ENCODE measurements at regions of chr2 and their contacts with region 1.

Region 1: DNA sequence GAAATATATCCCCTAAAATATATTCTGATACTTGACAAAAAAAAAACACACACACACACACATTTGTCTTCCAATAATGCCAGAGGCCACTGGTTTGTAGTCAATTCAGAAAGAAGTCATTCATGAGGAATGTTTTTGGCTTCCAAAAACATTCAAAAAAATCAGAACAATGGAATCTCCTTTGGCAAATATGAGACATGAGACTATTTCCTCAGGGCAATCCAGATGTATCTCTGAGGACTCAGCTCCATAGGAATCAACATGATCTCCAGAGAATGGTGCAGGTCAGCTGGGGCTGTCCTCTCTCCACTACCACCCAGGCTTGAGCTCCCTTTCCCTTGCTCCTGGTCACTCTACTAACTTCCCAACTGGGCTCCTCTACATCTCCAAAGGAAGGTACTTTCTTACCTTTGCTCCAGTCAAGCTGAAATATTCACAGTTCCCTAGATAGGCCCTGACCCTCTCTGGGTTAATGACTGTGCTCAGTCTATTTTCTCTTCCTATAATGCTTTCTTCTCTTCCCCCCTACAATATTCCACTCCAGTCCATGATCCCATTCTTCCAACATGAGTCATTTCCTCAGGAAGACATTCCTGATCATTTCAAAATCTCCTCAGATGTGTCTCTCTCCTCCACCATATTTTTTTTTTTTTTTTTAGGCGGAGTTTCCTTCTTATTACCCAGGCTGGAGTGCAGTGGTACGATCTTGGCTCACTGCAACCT is 145.3 kb downstream of the C1D start:
- DNase-seq: peak; percentile 97
- ATAC-seq: peak; percentile 91
- H3K4me3 ChIP-seq: peak overlapping the region; percentile 16; the same call in 1 of the 2 replicates
- H3K27ac ChIP-seq: peak overlapping the region; percentile 85
- H3K4me1 ChIP-seq: peaks cover 15% of the 10 kb centered on the region
- H3K27me3 ChIP-seq: no peaks in the 10 kb centered on the region
- CTCF ChIP-seq: no peak

Region 2: GRCh38 chr2:67997528-67997900 is 80.0 kb after region 1 on chr2:
- CTCF ChIA-PET with region 1: no interaction called
- POLR2A ChIA-PET with region 1: no interaction called
- intact Hi-C with region 1: loop called (anchors 1 kb)
- DNase-seq: peak; percentile 94
- ATAC-seq: peak; percentile 99
- H3K4me3 ChIP-seq: peak overlapping the region; percentile 42
- H3K27ac ChIP-seq: peak overlapping the region; percentile 92
- H3K4me1 ChIP-seq: peaks cover 23% of the 10 kb centered on the region
- H3K27me3 ChIP-seq: no peaks in the 10 kb centered on the region
- CTCF ChIP-seq: no peak

Measured in PC-3 (cell line).